HCT116 (cell line): ENCODE measurements at regions of chr11 and their contacts with region 1.

Region 1: GRCh38 chr11:69296890-69297786 is 3.2 kb downstream of the MYEOV start:
- DNase-seq: peak; percentile 97
- ATAC-seq: peak; percentile 27
- H3K4me3 ChIP-seq: peak overlapping the region; percentile 94 to 97
- H3K27ac ChIP-seq: peak overlapping the region; percentile 99
- H3K4me1 ChIP-seq: peaks cover 72 to 88% of the 10 kb centered on the region in 2 experiments
- H3K27me3 ChIP-seq: no peaks in the 10 kb centered on the region
- CTCF ChIP-seq: no peak
- POLR2A ChIP-seq: peak; percentile 15
- RAD21 ChIP-seq: no peak

Region 2: DNA sequence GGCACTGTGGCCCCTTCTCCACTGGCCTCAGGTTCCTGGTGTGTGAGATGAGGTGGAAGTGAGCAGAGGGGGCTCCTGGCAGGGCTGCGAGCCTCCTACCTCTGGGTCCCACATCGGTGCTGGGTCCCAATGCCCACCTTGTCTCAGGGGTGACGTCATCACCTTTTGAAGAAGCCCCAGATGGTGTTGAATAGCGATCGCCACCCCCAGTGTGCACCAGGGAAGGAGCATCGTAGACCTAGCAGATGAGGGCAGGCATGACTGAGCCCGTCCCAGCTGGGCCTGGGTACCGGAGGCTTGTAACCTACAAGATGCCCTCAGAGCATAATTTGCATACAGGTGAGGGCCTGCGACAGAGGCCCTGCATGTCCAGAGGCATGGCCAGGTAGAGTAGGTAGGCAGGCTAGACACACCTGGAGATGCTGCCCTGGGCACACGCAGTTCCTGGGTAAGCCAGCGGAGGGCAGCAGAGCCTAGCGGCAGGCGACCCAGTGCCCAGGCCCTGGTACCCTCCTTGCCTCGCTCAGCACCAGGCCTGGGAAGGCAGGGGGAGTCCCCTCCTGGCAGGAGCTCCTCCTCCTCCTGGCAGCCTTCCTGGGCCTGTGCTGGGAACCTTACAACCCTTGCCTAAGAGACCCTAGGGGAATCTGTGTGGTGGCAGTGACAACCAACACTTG is 195.9 kb before region 1 on chr11:
- CTCF ChIA-PET with region 1: interaction called, 12 read pairs
- POLR2A ChIA-PET with region 1: interaction called, 4 read pairs
- RAD21 ChIA-PET with region 1: interaction called, 7 to 9 read pairs
- intact Hi-C with region 1: loop called (anchors 1 kb)
- DNase-seq: peak; percentile 49
- ATAC-seq: peak; percentile 93
- H3K4me3 ChIP-seq: no peak overlapping the region
- H3K27ac ChIP-seq: no peak overlapping the region
- H3K4me1 ChIP-seq: peaks cover 3 to 21% of the 10 kb centered on the region in 2 experiments; a peak in 3 of 4 replicates
- H3K27me3 ChIP-seq: no peaks in the 10 kb centered on the region
- CTCF ChIP-seq: peak; percentile 95 to 99 (median 98)
- POLR2A ChIP-seq: no peak
- RAD21 ChIP-seq: peak; percentile 100

Region 3: GRCh38 chr11:69131644-69132300 is 165.4 kb before region 1 on chr11:
- CTCF ChIA-PET with region 1: interaction called, 22 read pairs
- POLR2A ChIA-PET with region 1: interaction called, 16 read pairs
- RAD21 ChIA-PET with region 1: interaction called, 7 to 8 read pairs
- intact Hi-C with region 1: loop called (anchors 5 kb)
- DNase-seq: peak; percentile 66
- ATAC-seq: peak; percentile 94
- H3K4me3 ChIP-seq: no peak overlapping the region
- H3K27ac ChIP-seq: peak overlapping the region; percentile 50
- H3K4me1 ChIP-seq: peaks cover 14 to 23% of the 10 kb centered on the region in 2 experiments
- H3K27me3 ChIP-seq: no peaks in the 10 kb centered on the region
- CTCF ChIP-seq: peak; percentile 81 to 94 (median 88); a peak in 5 of 6 replicates
- POLR2A ChIP-seq: no peak
- RAD21 ChIP-seq: peak; percentile 97

Region 4: DNA sequence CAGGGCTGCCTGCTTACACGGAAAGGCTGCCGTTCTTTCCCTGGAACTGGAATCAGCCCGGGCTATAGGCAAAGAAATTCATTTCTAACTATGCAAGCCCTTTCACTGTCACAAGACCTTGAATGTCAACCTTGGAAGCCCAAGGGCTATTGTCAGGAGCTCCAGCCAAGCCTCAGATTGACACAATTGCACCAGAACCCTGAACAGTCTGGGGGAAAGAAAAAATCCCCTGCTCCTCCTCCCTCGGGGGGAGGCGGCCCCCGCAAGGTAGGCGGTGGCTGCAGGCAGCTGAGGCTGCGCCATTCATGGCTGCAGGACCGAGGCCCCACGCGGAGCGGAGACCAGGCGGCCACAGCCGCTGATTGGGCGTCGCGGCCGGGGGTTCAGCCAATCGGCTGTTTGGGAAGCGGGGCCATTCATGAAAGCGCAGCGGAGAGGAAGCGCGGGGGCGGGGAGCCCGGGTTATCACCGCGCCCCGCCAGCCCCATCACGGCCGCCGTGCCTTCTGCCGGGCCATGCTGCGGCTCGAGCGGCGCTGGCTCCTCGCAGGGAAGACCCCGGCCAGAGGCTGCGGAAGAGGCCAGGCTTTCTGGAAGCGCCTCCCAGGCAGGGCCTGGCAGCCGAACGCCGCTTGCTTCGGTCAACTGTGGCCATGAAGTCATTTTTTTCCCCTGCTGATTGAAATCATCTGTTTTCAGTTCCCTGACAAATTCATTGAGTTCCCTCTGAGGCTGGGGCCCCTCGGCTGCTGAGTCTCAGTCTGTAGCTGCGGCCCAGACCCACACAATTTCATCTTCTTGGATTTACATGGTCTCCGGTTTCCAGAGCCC is 146.2 kb after region 1 on chr11:
- CTCF ChIA-PET with region 1: no interaction called
- POLR2A ChIA-PET with region 1: no interaction called
- RAD21 ChIA-PET with region 1: no interaction called
- intact Hi-C with region 1: loop called (anchors 5 kb)
- DNase-seq: peak; percentile 74
- ATAC-seq: peak; percentile 98
- H3K4me3 ChIP-seq: peak overlapping the region; percentile 47 to 57
- H3K27ac ChIP-seq: peak overlapping the region; percentile 63
- H3K4me1 ChIP-seq: peaks cover 18 to 36% of the 10 kb centered on the region in 2 experiments
- H3K27me3 ChIP-seq: no peaks in the 10 kb centered on the region
- CTCF ChIP-seq: no peak
- POLR2A ChIP-seq: peak; percentile 33
- RAD21 ChIP-seq: no peak; the same call in 1 of the 2 replicates

Region 5: GRCh38 chr11:69670158-69670845 is 373.2 kb after region 1 on chr11:
- CTCF ChIA-PET with region 1: interaction called, 11 read pairs
- POLR2A ChIA-PET with region 1: interaction called, 6 read pairs
- RAD21 ChIA-PET with region 1: interaction called, 3 to 4 read pairs
- intact Hi-C with region 1: loop called (anchors 10 kb)
- DNase-seq: peak; percentile 56
- ATAC-seq: peak; percentile 79
- H3K4me3 ChIP-seq: no peak overlapping the region
- H3K27ac ChIP-seq: peak overlapping the region; percentile 27; the same call in 1 of the 2 replicates
- H3K4me1 ChIP-seq: peaks cover 6 to 24% of the 10 kb centered on the region in 2 experiments; a peak in 3 of 4 replicates
- H3K27me3 ChIP-seq: no peaks in the 10 kb centered on the region
- CTCF ChIP-seq: peak; percentile 83 to 95 (median 91)
- POLR2A ChIP-seq: no peak
- RAD21 ChIP-seq: peak; percentile 91